Calu3 (cell line): ENCODE measurements at regions of chr5 and their contacts with region 1.

Region 1: GRCh38 chr5:93582677-93583438 is at the start of gene NR2F1:
- DNase-seq: peak; percentile 88
- H3K4me3 Mint-ChIP-seq: no peak within 1 kb of the TSS
- H3K27ac Mint-ChIP-seq: no peak within 1 kb of the TSS
- H3K4me1 Mint-ChIP-seq: no peaks in the 10 kb centered on the region
- H3K27me3 Mint-ChIP-seq: no peaks in the 10 kb centered on the region
- CTCF ChIP-seq: no peak
- total RNA-seq, gene NR2F1: 25.1 and 29.1 TPM in 2 replicates

Region 2: GRCh38 chr5:93092349-93093105 is 490.3 kb before region 1 on chr5:
- CTCF ChIA-PET with region 1: interaction called, 3 read pairs
- intact Hi-C with region 1: loop called (anchors 5 kb)
- DNase-seq: no peak
- H3K4me3 Mint-ChIP-seq: no peak overlapping the region
- H3K27ac Mint-ChIP-seq: no peak overlapping the region
- H3K4me1 Mint-ChIP-seq: peaks cover 12% of the 10 kb centered on the region
- H3K27me3 Mint-ChIP-seq: no peaks in the 10 kb centered on the region
- CTCF ChIP-seq: no peak

Region 3: GRCh38 chr5:93407454-93407853 is 175.4 kb before region 1 on chr5:
- CTCF ChIA-PET with region 1: no interaction called
- intact Hi-C with region 1: loop called (anchors 2 kb)
- DNase-seq: no peak
- H3K4me3 Mint-ChIP-seq: no peak overlapping the region
- H3K27ac Mint-ChIP-seq: no peak overlapping the region
- H3K4me1 Mint-ChIP-seq: peaks cover 20% of the 10 kb centered on the region
- H3K27me3 Mint-ChIP-seq: no peaks in the 10 kb centered on the region
- CTCF ChIP-seq: no peak

Region 4: GRCh38 chr5:93789173-93790070 is 206.6 kb after region 1 on chr5:
- CTCF ChIA-PET with region 1: interaction called, 4 read pairs
- intact Hi-C with region 1: loop called (anchors 2 kb)
- DNase-seq: no peak
- H3K4me3 Mint-ChIP-seq: no peak overlapping the region
- H3K27ac Mint-ChIP-seq: no peak overlapping the region
- H3K4me1 Mint-ChIP-seq: peaks cover 9% of the 10 kb centered on the region
- H3K27me3 Mint-ChIP-seq: no peaks in the 10 kb centered on the region
- CTCF ChIP-seq: no peak

Region 5: DNA sequence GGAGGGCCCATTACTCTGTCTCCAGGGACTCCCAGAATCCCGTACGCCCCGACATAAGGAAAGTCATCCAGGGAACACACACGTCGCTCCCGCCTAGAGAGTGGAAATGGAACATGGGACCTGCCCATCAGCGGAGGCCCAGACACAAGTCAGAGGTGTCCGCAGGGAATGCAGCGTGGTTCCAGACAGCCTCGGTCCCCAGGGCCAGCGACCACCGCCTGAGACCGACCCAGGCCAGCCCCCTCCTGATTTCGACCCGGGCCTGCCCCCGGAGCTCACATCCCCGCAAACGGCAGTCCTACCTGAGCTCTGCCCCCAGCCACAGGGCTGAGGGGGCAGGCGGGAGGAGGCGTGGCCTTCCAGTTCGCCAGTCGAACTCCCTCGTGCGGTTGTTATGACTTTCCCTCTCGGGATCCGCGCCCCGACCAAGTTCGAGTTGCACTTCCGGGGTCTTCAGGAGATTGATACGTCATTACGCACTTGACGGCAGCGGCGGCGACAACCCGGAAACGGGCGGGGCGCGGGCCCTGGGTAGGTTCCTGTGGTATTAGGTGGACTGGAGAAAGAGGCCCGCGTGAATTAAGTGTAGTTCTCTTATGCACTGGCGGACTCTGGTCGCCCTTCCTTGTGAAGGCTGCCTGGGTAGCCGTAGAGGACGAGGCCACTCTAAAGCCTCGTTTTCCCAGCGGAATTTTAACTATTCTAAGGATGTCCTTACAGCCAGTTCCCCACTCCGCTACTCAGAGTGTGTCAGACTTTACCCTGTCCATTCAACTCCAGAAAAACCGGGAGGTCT is 528.5 kb after region 1 on chr5:
- CTCF ChIA-PET with region 1: no interaction called
- intact Hi-C with region 1: loop called (anchors 10 kb)
- DNase-seq: peak; percentile 97
- H3K4me3 Mint-ChIP-seq: peak overlapping the region; percentile 90
- H3K27ac Mint-ChIP-seq: peak overlapping the region; percentile 86
- H3K4me1 Mint-ChIP-seq: peaks cover 22% of the 10 kb centered on the region
- H3K27me3 Mint-ChIP-seq: no peaks in the 10 kb centered on the region
- CTCF ChIP-seq: no peak